MCF 10A (cell line): ENCODE measurements at regions of chr15 and their contacts with region 1.

Region 1: GRCh38 chr15:80776420-80777045 is 2.6 kb upstream of the CEMIP start:
- DNase-seq: peak; percentile 65
- H3K4me3 Mint-ChIP-seq: no peak overlapping the region
- H3K27ac Mint-ChIP-seq: peak overlapping the region; percentile 31
- H3K4me1 Mint-ChIP-seq: peaks cover 20% of the 10 kb centered on the region
- H3K27me3 Mint-ChIP-seq: no peaks in the 10 kb centered on the region
- CTCF ChIP-seq: peak; percentile 54

Region 2: GRCh38 chr15:80455668-80456442 is 320.7 kb before region 1 on chr15:
- CTCF ChIA-PET with region 1: interaction called, 86 read pairs
- POLR2A ChIA-PET with region 1: interaction called, 5 read pairs
- intact Hi-C with region 1: loop called (anchors 1 kb)
- DNase-seq: peak; percentile 77
- H3K4me3 Mint-ChIP-seq: no peak overlapping the region
- H3K27ac Mint-ChIP-seq: no peak overlapping the region
- H3K4me1 Mint-ChIP-seq: peaks cover 13% of the 10 kb centered on the region
- H3K27me3 Mint-ChIP-seq: no peaks in the 10 kb centered on the region
- CTCF ChIP-seq: peak; percentile 77

Region 3: GRCh38 chr15:80609512-80609946 is 167.0 kb before region 1 on chr15:
- CTCF ChIA-PET with region 1: interaction called, 10 read pairs
- POLR2A ChIA-PET with region 1: no interaction called
- intact Hi-C with region 1: no loop called
- DNase-seq: peak; percentile 75
- H3K4me3 Mint-ChIP-seq: no peak overlapping the region
- H3K27ac Mint-ChIP-seq: peak overlapping the region; percentile 68
- H3K4me1 Mint-ChIP-seq: peaks cover 24% of the 10 kb centered on the region
- H3K27me3 Mint-ChIP-seq: no peaks in the 10 kb centered on the region
- CTCF ChIP-seq: no peak

Region 4: GRCh38 chr15:80695104-80695910 is 81.2 kb before region 1 on chr15 and contains the start of gene ABHD17C:
- CTCF ChIA-PET with region 1: interaction called, 19 read pairs
- POLR2A ChIA-PET with region 1: interaction called, 33 read pairs
- intact Hi-C with region 1: loop called (anchors 1 kb)
- DNase-seq: peak; percentile 65
- H3K4me3 Mint-ChIP-seq: peak within 1 kb of the TSS; percentile 92
- H3K27ac Mint-ChIP-seq: peak within 1 kb of the TSS; percentile 73
- H3K4me1 Mint-ChIP-seq: peaks cover 39% of the 10 kb centered on the region
- H3K27me3 Mint-ChIP-seq: no peaks in the 10 kb centered on the region
- CTCF ChIP-seq: no peak
- total RNA-seq, gene ABHD17C: 10.1 and 11.9 TPM in 2 replicates

Region 5: DNA sequence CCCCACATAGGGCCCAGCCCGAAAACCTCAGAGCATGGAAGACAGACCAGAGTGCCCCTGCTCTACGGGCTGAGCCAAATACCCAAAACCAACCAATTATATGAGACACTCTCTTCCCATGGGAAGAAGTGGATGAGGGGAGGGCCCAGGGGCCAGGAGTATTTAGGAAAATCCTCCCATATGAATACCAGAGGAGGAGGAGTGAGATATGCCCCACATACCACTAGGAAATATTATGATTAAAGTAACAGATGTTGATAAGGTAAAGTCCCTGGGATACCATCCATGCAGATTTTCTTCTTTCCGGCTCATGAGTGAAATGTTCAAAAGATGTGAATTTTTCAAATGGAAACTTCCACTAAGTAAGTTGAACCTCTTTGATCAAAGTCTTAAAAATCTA is 162.7 kb after region 1 on chr15:
- CTCF ChIA-PET with region 1: interaction called, 10 read pairs
- POLR2A ChIA-PET with region 1: no interaction called
- intact Hi-C with region 1: no loop called
- DNase-seq: no peak
- H3K4me3 Mint-ChIP-seq: no peak overlapping the region
- H3K27ac Mint-ChIP-seq: no peak overlapping the region
- H3K4me1 Mint-ChIP-seq: peaks cover 9% of the 10 kb centered on the region
- H3K27me3 Mint-ChIP-seq: no peaks in the 10 kb centered on the region
- CTCF ChIP-seq: no peak